Activated CD8-positive, alpha-beta T cell treated with anti-CD3 and anti-CD28 coated beads, Interleukin-2, amount 10 ng/mL, durations not matched to agents 7 days and 5 days (primary cell): ENCODE measurements at regions of chr5 and their contacts with region 1.

Region 1: DNA sequence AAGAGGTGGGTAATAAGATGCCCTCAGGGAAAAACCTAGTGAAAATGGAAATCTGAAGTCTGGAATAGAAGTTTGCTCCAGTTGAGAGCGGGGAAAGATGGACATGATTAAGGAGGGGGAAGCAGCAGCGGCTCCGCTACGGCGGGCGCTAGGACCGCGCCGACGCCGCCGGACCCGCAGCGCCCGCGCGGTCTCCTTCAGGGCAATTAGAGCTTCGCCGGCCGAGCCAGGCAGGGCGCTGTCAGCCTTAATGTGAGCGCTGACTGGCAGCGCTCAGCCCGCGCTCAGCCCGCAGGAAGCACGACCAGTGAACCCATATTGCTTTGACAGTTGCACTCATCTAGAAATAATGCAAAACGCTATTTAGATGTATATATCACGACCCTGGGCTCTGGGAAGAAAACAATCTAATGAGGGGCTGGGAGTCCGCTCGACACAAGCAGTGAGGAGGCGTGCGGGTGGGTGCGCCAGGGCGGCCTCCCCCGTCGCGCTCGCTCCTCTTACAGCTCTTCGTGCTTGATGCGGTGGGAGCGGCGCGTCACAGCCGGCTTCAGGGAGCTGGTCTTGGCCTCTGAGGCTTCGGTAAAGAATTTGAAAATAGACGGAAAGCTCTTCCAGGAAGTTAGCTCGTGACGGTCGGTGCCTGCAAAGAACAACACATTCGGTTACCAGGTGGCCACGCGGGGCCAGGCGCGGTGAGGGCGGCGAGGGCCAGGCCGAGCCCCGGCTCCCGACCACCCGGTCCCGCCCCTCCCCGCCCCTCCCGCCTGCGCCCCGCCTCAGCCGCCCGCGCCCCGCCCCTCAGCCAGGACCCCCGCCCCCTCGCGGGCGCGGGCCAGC is 37.7 kb downstream of the NR2F1 start:
- DNase-seq: peak; percentile 66
- ATAC-seq: peak; percentile 89
- H3K4me3 Mint-ChIP-seq: peak overlapping the region; percentile 84
- H3K27ac Mint-ChIP-seq: peak overlapping the region; percentile 68
- H3K4me1 Mint-ChIP-seq: peaks cover 18% of the 10 kb centered on the region
- H3K27me3 Mint-ChIP-seq: peaks cover 53% of the 10 kb centered on the region

Region 2: DNA sequence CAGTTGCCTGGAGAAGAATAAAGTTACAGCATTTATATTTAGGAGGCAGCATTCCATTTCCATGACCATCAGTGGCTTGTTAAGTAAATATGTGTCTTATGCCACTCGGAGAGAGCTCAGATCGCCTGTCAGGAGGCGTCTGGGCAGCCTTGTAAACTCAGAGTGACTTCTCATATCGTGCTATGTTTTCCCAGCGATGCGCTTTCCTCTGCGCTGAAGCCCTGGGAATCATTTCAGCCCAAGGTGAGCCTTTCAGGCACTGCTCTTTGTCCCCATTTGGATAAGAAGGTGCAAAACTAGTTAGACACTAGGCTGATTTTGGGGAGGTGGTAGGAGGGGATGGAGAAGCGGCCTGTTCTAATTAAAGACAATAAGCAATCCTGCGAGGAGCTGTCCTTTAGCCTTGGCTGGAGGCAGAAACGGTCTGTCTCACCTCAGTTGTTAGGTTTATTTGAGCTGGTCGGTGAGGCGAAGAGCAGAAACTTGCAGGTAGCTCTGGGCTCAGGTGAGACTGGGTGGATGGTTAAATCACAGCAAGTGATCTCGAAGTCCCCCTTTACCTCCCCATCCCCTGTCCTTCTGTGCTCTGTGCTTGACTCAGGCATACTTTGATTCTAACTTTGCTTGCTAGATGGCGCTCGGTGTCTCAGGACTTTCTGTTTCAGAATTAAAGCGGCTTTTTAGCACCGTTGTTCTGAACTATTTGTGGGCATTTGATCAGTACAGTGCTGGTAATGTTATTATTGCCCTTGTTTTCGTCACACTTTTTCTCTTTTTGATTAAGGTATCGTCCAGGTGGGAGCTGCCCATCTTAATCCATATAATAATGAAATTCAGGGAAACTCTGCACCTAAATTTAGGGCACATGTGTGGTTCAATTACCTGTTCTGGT is 13.1 kb before region 1 on chr5:
- CTCF ChIA-PET with region 1: interaction called, 15 read pairs
- POLR2A ChIA-PET with region 1: no interaction called
- DNase-seq: peak; percentile 53
- ATAC-seq: peak; percentile 78
- H3K4me3 Mint-ChIP-seq: no peak overlapping the region
- H3K27ac Mint-ChIP-seq: no peak overlapping the region
- H3K4me1 Mint-ChIP-seq: peaks cover 10% of the 10 kb centered on the region
- H3K27me3 Mint-ChIP-seq: peaks cover 73% of the 10 kb centered on the region

Region 3: GRCh38 chr5:93800988-93801811 is 180.5 kb after region 1 on chr5:
- CTCF ChIA-PET with region 1: interaction called, 12 read pairs
- POLR2A ChIA-PET with region 1: no interaction called
- DNase-seq: peak; percentile 37
- ATAC-seq: no peak
- H3K4me3 Mint-ChIP-seq: no peak overlapping the region
- H3K27ac Mint-ChIP-seq: no peak overlapping the region
- H3K4me1 Mint-ChIP-seq: peaks cover 3% of the 10 kb centered on the region
- H3K27me3 Mint-ChIP-seq: no peaks in the 10 kb centered on the region